PC-3 (cell line): ENCODE measurements at regions of chr6 and their contacts with region 1.

Region 1: DNA sequence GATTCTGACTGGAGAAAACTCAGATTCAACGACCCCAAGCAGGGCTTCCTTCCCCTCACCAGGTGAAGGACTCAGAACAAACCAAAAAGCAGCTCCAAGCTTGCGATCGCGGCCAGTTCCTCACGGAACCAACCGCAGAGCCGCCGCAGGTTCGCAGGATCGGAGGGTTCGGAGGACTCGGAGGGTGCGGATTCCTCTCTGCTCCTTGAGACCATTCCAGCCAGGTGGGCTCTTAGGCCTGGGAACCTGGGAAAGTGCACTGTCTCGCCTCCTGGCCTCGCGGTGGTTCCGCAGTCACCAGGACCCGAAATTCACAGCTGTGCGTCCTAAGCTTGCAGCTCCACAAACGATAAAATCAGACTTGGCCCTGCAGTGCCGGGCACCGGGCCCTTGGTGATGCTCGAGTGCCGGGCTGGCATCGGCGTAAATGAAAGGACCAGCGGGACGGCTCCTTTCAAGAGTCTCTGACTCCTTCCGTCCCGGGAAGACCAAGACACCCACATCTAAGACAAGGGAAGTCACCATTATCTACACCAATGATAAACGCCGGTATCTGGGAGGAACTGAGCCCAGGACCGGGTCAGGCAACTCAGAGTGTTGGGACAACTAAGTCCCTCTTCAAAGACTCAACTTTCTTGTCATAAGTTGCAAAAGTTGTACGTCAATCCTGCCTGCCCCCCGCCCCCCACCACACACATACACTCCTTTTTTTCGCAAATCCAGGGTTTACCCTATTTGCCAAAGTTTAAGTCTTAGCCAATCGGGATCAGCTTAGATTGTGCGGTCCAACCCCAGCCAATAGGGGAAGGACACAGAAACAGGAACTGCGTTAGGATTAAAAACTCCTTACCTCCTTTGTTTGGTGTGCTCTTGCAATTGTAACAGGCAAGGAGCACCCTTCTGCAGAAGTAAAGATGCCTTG is 69.8 kb upstream of the PRSS16 start:
- DNase-seq: peak; percentile 88
- ATAC-seq: peak; percentile 81
- H3K4me3 ChIP-seq: peak overlapping the region; percentile 99
- H3K27ac ChIP-seq: peak overlapping the region; percentile 52
- H3K4me1 ChIP-seq: no peaks in the 10 kb centered on the region
- H3K27me3 ChIP-seq: no peaks in the 10 kb centered on the region
- CTCF ChIP-seq: peak; percentile 62

Region 2: GRCh38 chr6:27251606-27252251 is 74.0 kb after region 1 on chr6:
- CTCF ChIA-PET with region 1: interaction called, 10 read pairs
- POLR2A ChIA-PET with region 1: no interaction called
- intact Hi-C with region 1: no loop called
- DNase-seq: peak; percentile 92
- ATAC-seq: peak; percentile 88
- H3K4me3 ChIP-seq: peak overlapping the region; percentile 98
- H3K27ac ChIP-seq: peak overlapping the region; percentile 43
- H3K4me1 ChIP-seq: peaks cover 9% of the 10 kb centered on the region; the same call in 1 of the 2 replicates
- H3K27me3 ChIP-seq: no peaks in the 10 kb centered on the region
- CTCF ChIP-seq: peak; percentile 70

Region 3: DNA sequence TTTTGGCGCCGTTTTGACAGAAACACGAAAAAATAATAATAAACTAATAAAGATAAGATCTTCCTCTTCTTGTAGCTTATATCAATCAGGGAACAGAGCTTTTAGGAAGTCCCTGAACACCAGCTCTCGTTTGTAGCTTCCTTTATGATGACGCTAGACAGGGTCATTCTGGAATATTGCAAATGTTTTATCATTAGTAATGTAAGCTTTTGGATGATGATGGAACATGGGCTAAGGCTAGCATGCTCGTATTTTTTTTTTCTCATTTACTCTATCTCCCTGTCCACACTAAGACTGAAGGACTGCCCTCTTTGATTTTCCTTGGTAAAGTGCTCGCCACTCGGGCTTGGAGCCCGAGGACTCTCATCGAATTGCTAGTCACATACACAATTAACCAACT is 156.4 kb after region 1 on chr6:
- CTCF ChIA-PET with region 1: no interaction called
- POLR2A ChIA-PET with region 1: no interaction called
- intact Hi-C with region 1: no loop called
- DNase-seq: no peak
- ATAC-seq: no peak
- H3K4me3 ChIP-seq: peak overlapping the region; percentile 76
- H3K27ac ChIP-seq: no peak overlapping the region
- H3K4me1 ChIP-seq: no peaks in the 10 kb centered on the region
- H3K27me3 ChIP-seq: no peaks in the 10 kb centered on the region
- CTCF ChIP-seq: no peak

Region 4: GRCh38 chr6:27547157-27548075 is 369.7 kb after region 1 on chr6:
- CTCF ChIA-PET with region 1: no interaction called
- POLR2A ChIA-PET with region 1: no interaction called
- intact Hi-C with region 1: loop called (anchors 1 kb)
- DNase-seq: peak; percentile 89
- ATAC-seq: peak; percentile 79
- H3K4me3 ChIP-seq: peak overlapping the region; percentile 68
- H3K27ac ChIP-seq: peak overlapping the region; percentile 38
- H3K4me1 ChIP-seq: peaks cover 17% of the 10 kb centered on the region
- H3K27me3 ChIP-seq: no peaks in the 10 kb centered on the region
- CTCF ChIP-seq: no peak

Region 5: DNA sequence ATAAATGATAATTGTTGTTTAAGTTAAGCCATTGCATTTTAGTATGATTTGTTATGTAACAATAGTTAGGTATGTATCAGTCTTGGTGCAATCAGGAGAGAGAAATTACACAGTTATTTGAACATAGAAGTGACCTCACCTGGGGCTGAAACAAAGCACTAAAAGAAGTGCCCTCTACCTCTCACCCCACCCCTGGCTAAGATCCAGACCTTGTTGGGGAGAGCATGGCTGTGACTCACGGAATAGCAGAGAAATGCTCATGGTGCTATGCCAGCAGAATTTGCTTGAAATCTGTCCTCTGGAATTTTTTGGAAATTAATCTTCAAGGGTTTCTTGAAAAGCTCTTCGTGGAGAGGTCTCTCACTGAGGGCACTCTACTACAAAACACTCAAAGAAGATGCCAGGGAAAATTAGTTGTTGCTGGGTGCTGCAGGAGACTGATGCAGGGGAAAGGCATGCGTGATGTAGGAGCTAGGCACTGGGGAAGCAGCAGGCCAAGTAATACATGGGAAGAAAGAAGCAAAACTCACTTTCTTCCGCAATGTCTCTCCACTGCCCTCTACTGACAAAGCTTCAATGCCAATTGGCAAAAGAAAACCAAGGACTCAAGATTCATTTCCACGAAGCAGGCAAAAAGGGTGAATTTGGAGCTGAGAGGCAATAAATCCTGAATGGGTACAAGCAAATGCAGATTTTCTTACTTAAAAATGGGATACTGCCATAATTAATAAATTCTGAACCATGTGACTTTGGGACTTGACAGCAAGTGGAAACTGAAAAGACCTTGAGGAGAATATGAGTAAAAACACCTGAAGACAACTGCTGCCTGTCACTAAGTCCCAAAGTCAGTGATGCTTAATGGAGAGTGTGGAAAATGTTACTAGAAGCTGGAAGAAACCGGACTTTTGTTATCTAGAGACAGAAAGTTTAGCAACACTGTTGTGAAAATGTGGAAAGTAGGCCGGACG is 431.5 kb after region 1 on chr6:
- CTCF ChIA-PET with region 1: interaction called, 13 read pairs
- POLR2A ChIA-PET with region 1: no interaction called
- intact Hi-C with region 1: no loop called
- DNase-seq: peak; percentile 86
- ATAC-seq: peak; percentile 89
- H3K4me3 ChIP-seq: peak overlapping the region; percentile 39; the same call in 1 of the 2 replicates
- H3K27ac ChIP-seq: peak overlapping the region; percentile 49
- H3K4me1 ChIP-seq: peaks cover 7% of the 10 kb centered on the region
- H3K27me3 ChIP-seq: no peaks in the 10 kb centered on the region
- CTCF ChIP-seq: peak; percentile 90

Region 6: GRCh38 chr6:27902335-27903314 is 724.9 kb after region 1 on chr6:
- CTCF ChIA-PET with region 1: no interaction called
- POLR2A ChIA-PET with region 1: no interaction called
- intact Hi-C with region 1: loop called (anchors 2 kb)
- DNase-seq: peak; percentile 90
- ATAC-seq: peak; percentile 89
- H3K4me3 ChIP-seq: peak overlapping the region; percentile 72
- H3K27ac ChIP-seq: peak overlapping the region; percentile 5; the same call in 1 of the 2 replicates
- H3K4me1 ChIP-seq: no peaks in the 10 kb centered on the region
- H3K27me3 ChIP-seq: no peaks in the 10 kb centered on the region
- CTCF ChIP-seq: no peak